Endothelial cell of umbilical vein (primary cell): ENCODE measurements at regions of chr1 and their contacts with region 1.

Region 1: GRCh38 chr1:65440915-65441314 is 20.4 kb downstream of the LEPR start:
- DNase-seq: no peak
- H3K4me3 ChIP-seq: no peak overlapping the region
- H3K27ac ChIP-seq: no peak overlapping the region
- H3K4me1 ChIP-seq: no peaks in the 10 kb centered on the region
- H3K27me3 ChIP-seq: no peaks in the 10 kb centered on the region
- CTCF ChIP-seq: no peak
- POLR2A ChIP-seq: no peak

Region 2: GRCh38 chr1:65459397-65459768 is 18.5 kb after region 1 on chr1:
- CTCF ChIA-PET with region 1: interaction called, 24 read pairs
- POLR2A ChIA-PET with region 1: no interaction called
- dilution Hi-C with region 1: no loop called
- intact Hi-C with region 1: no loop called
- DNase-seq: peak; percentile 50
- H3K4me3 ChIP-seq: no peak overlapping the region
- H3K27ac ChIP-seq: no peak overlapping the region
- H3K4me1 ChIP-seq: no peaks in the 10 kb centered on the region
- H3K27me3 ChIP-seq: no peaks in the 10 kb centered on the region
- CTCF ChIP-seq: peak; percentile 44 to 56
- POLR2A ChIP-seq: no peak